Spleen (tissue), 13 donors: ENCODE measurements at regions of chr7 and their contacts with region 1.

Region 1: DNA sequence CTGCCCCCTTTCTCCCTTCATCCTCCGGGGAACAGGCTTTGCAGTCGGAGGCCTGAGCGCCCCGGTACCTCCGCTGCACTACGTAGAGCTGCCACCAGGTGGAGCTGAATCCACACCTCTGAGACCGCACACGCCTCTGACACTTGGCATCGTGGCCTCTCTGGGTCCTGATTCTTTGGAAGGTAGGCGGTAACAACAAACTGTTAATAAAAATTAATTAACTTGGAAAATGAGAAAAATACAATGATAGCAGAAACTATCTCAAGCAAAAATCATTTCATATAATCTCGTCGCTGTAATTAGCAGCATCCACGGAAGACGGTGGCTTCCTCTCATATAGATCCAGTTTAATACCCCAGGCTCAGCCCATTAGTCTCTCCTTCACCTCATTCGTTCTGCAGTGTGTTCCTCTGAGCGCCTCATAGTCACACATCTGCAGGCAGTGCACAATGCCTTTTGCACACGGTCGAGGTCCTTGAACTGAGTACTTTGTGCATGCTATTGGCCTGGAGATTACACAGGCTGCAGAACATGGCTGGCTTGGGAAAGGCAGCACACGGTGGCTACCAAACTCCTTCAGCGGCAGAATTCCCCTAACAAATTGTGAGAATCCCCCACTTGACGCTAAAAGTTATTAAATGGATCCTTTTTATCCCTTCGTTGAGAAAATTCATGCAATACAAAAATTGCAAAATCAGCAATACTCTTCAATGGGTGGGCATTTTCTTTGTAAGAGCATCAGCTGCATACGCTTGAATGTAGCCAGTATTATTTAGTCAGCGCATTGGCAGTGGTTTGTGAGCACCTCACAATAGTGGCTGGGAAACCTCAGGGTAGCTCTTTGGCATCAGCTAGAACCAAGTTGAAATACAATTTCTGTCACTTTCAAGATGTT is 18.7 kb downstream of the OR9A2 start:
- DNase-seq: peak; percentile 95
- H3K4me3 ChIP-seq: no peak overlapping the region
- H3K27ac ChIP-seq: no peak overlapping the region
- H3K4me1 ChIP-seq: peaks cover 0 to 35% (median 9%) of the 10 kb centered on the region in 6 donors
- H3K27me3 ChIP-seq: peaks cover 0 to 5% (median 0%) of the 10 kb centered on the region in 7 donors
- CTCF ChIP-seq: peak; percentile 84 to 99 (median 95)
- POLR2A ChIP-seq: no peak

Region 2: DNA sequence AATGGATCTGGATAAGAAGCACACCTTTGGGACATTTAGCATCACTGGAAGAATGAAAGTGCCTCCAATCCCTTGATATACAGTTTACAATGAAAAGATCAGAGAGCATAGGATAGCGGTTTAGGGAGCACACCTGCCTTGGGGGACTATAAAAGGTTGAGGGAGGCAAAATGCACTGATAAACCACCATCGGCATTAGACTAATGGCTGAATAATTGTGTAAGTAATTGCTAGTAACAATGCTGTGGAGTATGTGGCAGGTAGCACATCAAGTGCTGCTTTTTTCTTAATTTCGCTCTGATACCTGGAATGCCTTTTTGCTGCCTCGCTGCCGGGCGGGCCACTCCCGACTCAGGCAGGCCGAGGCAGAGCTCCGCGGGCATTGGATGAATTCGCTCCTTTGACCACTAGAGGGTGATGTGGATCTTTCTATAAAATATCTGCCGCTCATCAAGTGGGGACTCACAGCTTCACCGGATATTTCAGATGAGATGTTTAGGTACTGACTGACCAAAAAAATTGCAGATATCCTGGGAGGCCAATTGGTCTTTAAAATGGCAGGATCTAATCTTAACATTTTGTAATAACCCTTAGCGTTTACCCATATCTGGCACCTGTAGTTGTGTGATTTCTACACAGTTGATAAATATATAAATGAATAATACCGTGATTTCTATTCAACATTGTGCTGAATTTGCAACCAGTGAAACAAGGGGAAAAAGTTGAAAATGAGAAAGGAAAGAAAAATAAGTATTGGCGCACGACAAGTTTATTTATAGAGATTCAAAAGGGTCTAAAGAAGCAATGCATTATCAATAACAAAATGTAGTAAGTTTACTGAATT is 375.7 kb before region 1 on chr7:
- intact Hi-C with region 1: loop called (anchors 10 kb)
- DNase-seq: peak; percentile 81
- H3K4me3 ChIP-seq: no peak overlapping the region
- H3K27ac ChIP-seq: no peak overlapping the region
- H3K4me1 ChIP-seq: peaks cover 0 to 7% (median 1%) of the 10 kb centered on the region in 6 donors
- H3K27me3 ChIP-seq: peaks cover 0 to 12% (median 0%) of the 10 kb centered on the region in 7 donors
- CTCF ChIP-seq: peak; percentile 28 to 88 (median 82)
- POLR2A ChIP-seq: no peak

Region 3: GRCh38 chr7:142853739-142854371 is 154.4 kb before region 1 on chr7:
- intact Hi-C with region 1: loop called (anchors 10 kb)
- DNase-seq: peak; percentile 95
- H3K4me3 ChIP-seq: peak overlapping the region; percentile 67 to 89 (median 78)
- H3K27ac ChIP-seq: peak overlapping the region; percentile 66 to 91 (median 82)
- H3K4me1 ChIP-seq: peaks cover 4 to 38% (median 24%) of the 10 kb centered on the region in 6 donors
- H3K27me3 ChIP-seq: peaks cover 0 to 12% (median 0%) of the 10 kb centered on the region in 7 donors
- CTCF ChIP-seq: peak; percentile 49 to 85 (median 76)
- POLR2A ChIP-seq: peak in 1 of 3 donors; percentile 33

Region 4: GRCh38 chr7:143214789-143215679 is 206.8 kb after region 1 on chr7:
- intact Hi-C with region 1: loop called (anchors 5 kb)
- DNase-seq: no peak
- H3K4me3 ChIP-seq: no peak overlapping the region
- H3K27ac ChIP-seq: no peak overlapping the region
- H3K4me1 ChIP-seq: peaks cover 0 to 8% (median 1%) of the 10 kb centered on the region in 6 donors
- H3K27me3 ChIP-seq: peaks cover 0 to 5% (median 0%) of the 10 kb centered on the region in 7 donors
- CTCF ChIP-seq: peak; percentile 98 to 99 (median 98)
- POLR2A ChIP-seq: no peak